ENCODE measurements at regions of chr16 and their contacts with region 1.

Region 1: DNA sequence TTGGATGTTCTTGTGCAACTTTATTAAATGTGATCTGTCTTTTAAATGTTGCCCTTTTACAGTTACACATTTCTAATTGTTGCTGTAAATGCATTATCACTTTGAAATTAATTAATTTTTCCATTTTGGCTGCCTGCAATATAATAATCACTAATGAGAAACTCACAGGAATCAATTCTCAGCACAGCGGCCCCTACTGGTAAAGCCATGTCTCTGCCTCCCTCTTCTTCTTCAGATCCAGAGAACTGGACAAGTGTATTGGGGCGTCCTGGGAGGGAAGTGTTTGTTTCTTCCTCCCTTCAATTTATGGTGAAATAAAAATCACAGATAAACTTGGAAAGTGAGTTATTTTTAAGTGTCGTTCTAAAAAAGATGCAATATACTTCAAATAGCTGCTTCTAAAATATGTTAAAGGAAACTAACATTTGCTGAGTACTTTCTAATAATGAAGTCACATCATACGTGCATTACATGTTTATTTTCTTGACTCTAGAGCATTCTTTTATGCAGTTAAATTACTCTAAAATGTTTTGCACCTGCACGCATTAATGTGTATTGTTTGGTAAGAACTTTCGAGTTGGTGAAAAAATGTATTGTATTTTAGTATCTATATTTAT is 338.0 kb downstream of the WWOX start:
- DNase-seq: peak in 5 of 9 donors; percentile 3 to 12 (median 10)
- ATAC-seq: peak; percentile 54
- H3K4me3 ChIP-seq: no peak overlapping the region
- H3K4me3 Mint-ChIP-seq: no peak overlapping the region
- H3K27ac ChIP-seq: no peak overlapping the region
- H3K27ac Mint-ChIP-seq: no peak overlapping the region
- H3K4me1 ChIP-seq: no peaks in the 10 kb centered on the region
- H3K4me1 Mint-ChIP-seq: peaks cover 0 to 2% (median 0%) of the 10 kb centered on the region in 7 donors
- H3K27me3 ChIP-seq: no peaks in the 10 kb centered on the region
- H3K27me3 Mint-ChIP-seq: no peaks in the 10 kb centered on the region

Region 2: GRCh38 chr16:78116946-78117345 is 320.5 kb before region 1 on chr16:
- CTCF ChIA-PET with region 1: no interaction called
- POLR2A ChIA-PET with region 1: no interaction called
- intact Hi-C with region 1: loop called (anchors 2 to 10 kb)
- DNase-seq: no peak
- ATAC-seq: no peak
- H3K4me3 ChIP-seq: no peak overlapping the region
- H3K4me3 Mint-ChIP-seq: no peak overlapping the region
- H3K27ac ChIP-seq: no peak overlapping the region
- H3K27ac Mint-ChIP-seq: peak overlapping the region in 1 of 9 donors; percentile 6
- H3K4me1 ChIP-seq: no peaks in the 10 kb centered on the region
- H3K4me1 Mint-ChIP-seq: no peaks in the 10 kb centered on the region
- H3K27me3 ChIP-seq: no peaks in the 10 kb centered on the region
- H3K27me3 Mint-ChIP-seq: no peaks in the 10 kb centered on the region

Region 3: GRCh38 chr16:78407191-78407590 is 30.3 kb before region 1 on chr16:
- CTCF ChIA-PET with region 1: no interaction called
- POLR2A ChIA-PET with region 1: no interaction called
- intact Hi-C with region 1: no loop called
- DNase-seq: no peak
- ATAC-seq: no peak
- H3K4me3 ChIP-seq: no peak overlapping the region
- H3K4me3 Mint-ChIP-seq: no peak overlapping the region
- H3K27ac ChIP-seq: no peak overlapping the region
- H3K27ac Mint-ChIP-seq: no peak overlapping the region
- H3K4me1 ChIP-seq: no peaks in the 10 kb centered on the region
- H3K4me1 Mint-ChIP-seq: no peaks in the 10 kb centered on the region
- H3K27me3 ChIP-seq: no peaks in the 10 kb centered on the region
- H3K27me3 Mint-ChIP-seq: no peaks in the 10 kb centered on the region

Region 4: DNA sequence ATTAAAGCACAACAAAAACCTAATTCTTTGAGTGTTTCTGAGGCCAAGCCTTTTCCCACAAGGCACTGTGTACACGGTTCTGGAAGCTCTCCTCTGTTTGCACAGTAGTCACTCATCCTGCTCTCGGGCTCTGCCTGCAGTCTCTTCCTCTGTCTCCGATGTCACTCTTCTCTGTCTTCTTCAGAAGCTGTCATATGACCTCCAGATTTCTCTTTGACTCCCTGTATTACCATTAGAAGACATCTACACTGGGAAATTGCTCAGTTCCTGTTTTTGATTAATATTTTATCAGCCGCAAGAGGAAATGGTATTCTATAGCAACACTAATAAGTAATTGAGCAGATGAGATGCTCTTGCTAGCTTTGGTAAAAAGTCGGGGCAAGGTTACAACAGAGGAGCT is 84.9 kb after region 1 on chr16:
- CTCF ChIA-PET with region 1: no interaction called
- POLR2A ChIA-PET with region 1: no interaction called
- intact Hi-C with region 1: no loop called
- DNase-seq: no peak
- ATAC-seq: no peak
- H3K4me3 ChIP-seq: no peak overlapping the region
- H3K4me3 Mint-ChIP-seq: no peak overlapping the region
- H3K27ac ChIP-seq: no peak overlapping the region
- H3K27ac Mint-ChIP-seq: no peak overlapping the region
- H3K4me1 ChIP-seq: no peaks in the 10 kb centered on the region
- H3K4me1 Mint-ChIP-seq: peaks cover 0 to 4% (median 0%) of the 10 kb centered on the region in 7 donors
- H3K27me3 ChIP-seq: no peaks in the 10 kb centered on the region
- H3K27me3 Mint-ChIP-seq: no peaks in the 10 kb centered on the region

Region 5: GRCh38 chr16:78742501-78743283 is 305.2 kb after region 1 on chr16:
- CTCF ChIA-PET with region 1: no interaction called
- POLR2A ChIA-PET with region 1: no interaction called
- intact Hi-C with region 1: no loop called
- DNase-seq: peak; percentile 27 to 72 (median 46)
- ATAC-seq: peak; percentile 93
- H3K4me3 ChIP-seq: peak overlapping the region; percentile 62
- H3K4me3 Mint-ChIP-seq: peak overlapping the region; percentile 61 to 84 (median 77)
- H3K27ac ChIP-seq: peak overlapping the region; percentile 73
- H3K27ac Mint-ChIP-seq: peak overlapping the region; percentile 86 to 98 (median 93)
- H3K4me1 ChIP-seq: peaks cover 12 to 22% of the 10 kb centered on the region in 2 donors
- H3K4me1 Mint-ChIP-seq: peaks cover 5 to 23% (median 20%) of the 10 kb centered on the region in 7 donors
- H3K27me3 ChIP-seq: no peaks in the 10 kb centered on the region
- H3K27me3 Mint-ChIP-seq: no peaks in the 10 kb centered on the region

Region 6: DNA sequence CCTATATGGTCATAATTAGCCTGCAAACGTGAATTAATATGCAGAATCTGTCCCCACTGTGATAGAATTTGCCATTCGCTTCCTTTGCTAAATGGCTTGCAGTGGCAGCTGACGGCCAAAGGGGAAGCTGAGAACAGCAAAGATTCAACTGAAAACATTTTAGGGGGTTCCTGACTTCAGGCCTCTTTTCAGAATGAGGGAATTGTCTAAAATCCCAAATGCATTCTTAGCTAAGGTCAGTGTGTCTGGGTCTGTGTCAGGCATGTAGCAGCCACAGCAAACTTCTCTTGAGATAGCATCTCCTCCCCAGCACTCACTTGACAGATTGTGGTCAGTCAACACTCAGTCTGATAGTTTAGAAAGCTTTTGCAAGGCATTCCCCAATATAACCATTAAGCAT is 363.1 kb after region 1 on chr16:
- CTCF ChIA-PET with region 1: no interaction called
- POLR2A ChIA-PET with region 1: no interaction called
- intact Hi-C with region 1: no loop called
- DNase-seq: no peak
- ATAC-seq: no peak
- H3K4me3 ChIP-seq: no peak overlapping the region
- H3K4me3 Mint-ChIP-seq: no peak overlapping the region
- H3K27ac ChIP-seq: no peak overlapping the region
- H3K27ac Mint-ChIP-seq: no peak overlapping the region
- H3K4me1 ChIP-seq: peaks cover 0 to 8% of the 10 kb centered on the region in 2 donors
- H3K4me1 Mint-ChIP-seq: peaks cover 0 to 20% (median 0%) of the 10 kb centered on the region in 7 donors
- H3K27me3 ChIP-seq: no peaks in the 10 kb centered on the region
- H3K27me3 Mint-ChIP-seq: no peaks in the 10 kb centered on the region